Dorsolateral prefrontal cortex (tissue), 120 donors: ENCODE measurements at regions of chr17 and their contacts with region 1.

Region 1: GRCh38 chr17:13002766-13003451 is 14.9 kb downstream of the ELAC2 start:
- DNase-seq: peak; percentile 78 to 96 (median 86)
- H3K4me3 ChIP-seq: no peak overlapping the region
- H3K27ac ChIP-seq: no peak overlapping the region
- H3K27me3 ChIP-seq: no peaks in the 10 kb centered on the region
- CTCF ChIP-seq: peak; percentile 76 to 96 (median 88)

Region 2: GRCh38 chr17:12180644-12181261 is 822.2 kb before region 1 on chr17:
- intact Hi-C with region 1: loop called (anchors 2 to 5 kb)
- DNase-seq: peak in 2 of 10 donors; percentile 20 to 33
- H3K4me3 ChIP-seq: peak overlapping the region in 2 of 59 donors; percentile 13 to 27
- H3K27ac ChIP-seq: peak overlapping the region in 3 of 59 donors; percentile 2 to 36 (median 12)
- H3K27me3 ChIP-seq: no peaks in the 10 kb centered on the region
- CTCF ChIP-seq: peak; percentile 61 to 89 (median 78)

Region 3: DNA sequence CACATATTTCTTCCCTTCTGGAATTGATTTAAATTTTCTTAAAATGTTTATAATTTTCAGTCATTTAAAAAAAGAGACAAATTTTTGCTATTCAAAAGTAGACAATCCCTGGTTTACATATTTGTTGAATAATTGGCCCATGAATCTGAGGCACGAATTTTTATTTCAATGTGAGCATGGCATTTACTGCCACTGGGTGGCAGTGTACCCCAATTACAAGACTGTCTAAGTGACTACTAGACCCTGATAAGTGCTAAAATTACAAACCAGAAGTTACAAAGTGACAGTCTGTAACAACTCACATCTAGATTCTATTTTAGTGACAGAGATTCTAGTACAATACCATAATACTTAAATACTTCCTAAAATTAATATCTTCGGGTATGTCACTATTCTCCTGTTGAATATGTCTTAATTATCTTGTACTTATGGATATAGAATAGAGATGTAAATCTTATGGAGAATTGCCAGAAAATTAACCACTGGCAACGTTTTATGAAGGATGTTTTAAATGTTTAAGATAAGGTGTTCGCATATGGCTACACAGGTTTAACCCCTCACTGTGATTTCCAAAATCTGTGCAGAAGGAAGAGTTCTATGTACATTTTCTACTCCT is 746.4 kb before region 1 on chr17:
- intact Hi-C with region 1: loop called (anchors 5 kb)
- DNase-seq: peak in 6 of 10 donors; percentile 29 to 53 (median 42)
- H3K4me3 ChIP-seq: no peak overlapping the region
- H3K27ac ChIP-seq: no peak overlapping the region
- H3K27me3 ChIP-seq: peaks cover 0 to 9% (median 0%) of the 10 kb centered on the region in 45 donors
- CTCF ChIP-seq: peak; percentile 64 to 90 (median 78)

Region 4: DNA sequence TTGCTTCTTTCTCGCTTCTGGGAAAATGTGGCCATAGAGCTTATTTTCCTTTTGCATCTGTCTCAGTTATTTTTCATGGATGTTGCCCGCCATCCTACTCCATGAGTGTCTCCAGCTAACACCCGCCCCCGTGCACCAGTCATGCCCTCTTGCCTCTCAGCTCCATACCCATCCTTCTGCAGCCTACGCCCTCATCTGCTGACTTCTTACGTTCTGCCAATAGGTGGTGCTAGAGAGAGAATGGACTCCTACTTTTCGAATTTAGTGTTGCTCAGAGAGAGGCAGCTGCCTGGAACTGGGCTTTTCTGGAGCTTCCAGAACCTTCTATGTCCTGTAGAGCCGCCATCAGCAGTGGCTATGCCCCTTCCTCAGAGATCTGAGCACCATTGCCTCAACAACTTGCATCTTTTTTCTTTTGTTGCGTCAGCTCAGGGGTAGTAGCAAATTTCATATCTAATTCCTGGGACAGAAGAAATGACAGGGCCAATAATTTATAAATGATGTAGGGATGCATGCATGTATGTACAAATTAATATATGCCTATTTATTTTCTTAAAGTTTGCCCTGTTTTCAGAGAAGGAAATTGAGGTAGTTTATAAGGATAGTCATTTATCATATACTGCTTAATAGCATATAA is 456.9 kb before region 1 on chr17:
- intact Hi-C with region 1: loop called in 1 of 2 experiments (anchors 10 kb)
- DNase-seq: peak in 2 of 10 donors; percentile 6 to 22
- H3K4me3 ChIP-seq: no peak overlapping the region
- H3K27ac ChIP-seq: no peak overlapping the region
- H3K27me3 ChIP-seq: peaks cover 0 to 7% (median 0%) of the 10 kb centered on the region in 45 donors
- CTCF ChIP-seq: peak; percentile 24 to 78 (median 65)